Activated B cell treated with CpG ODN at 0.5 μM for 24 hours (primary cell): ENCODE measurements at regions of chr11 and their contacts with region 1.

Region 1: DNA sequence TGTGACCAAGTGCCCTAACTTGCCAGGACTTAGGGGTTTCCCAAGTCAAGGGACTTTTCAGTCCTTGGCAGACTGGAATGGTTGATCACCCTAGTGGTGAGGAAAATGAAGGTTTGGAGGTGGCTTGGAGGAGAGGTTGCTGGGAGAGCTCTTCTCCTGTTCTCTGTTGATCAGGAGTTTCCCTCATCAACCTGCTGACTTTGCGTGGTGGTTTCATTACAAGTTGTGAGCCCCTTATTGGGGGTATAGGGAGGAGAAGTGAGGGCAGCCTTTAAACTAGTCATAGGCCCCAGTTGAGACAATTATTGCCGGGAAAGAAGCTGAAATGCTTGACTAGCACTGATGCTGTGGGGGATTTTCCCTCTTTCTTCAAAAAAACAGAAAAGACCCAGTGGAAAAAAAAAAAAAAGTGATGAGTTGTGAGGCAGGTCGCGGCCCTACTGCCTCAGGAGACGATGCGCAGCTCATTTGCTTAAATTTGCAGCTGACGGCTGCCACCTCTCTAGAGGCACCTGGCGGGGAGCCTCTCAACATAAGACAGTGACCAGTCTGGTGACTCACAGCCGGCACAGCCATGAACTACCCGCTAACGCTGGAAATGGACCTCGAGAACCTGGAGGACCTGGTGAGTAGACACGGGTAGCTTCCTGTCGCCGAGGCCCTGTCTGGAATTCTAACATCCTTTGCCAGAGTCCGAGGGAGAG is at the start of gene CXCR5:
- DNase-seq: peak; percentile 69
- ATAC-seq: peak; percentile 78
- H3K4me3 Mint-ChIP-seq: peak within 1 kb of the TSS; percentile 98
- H3K27ac Mint-ChIP-seq: peak within 1 kb of the TSS; percentile 98
- H3K4me1 Mint-ChIP-seq: peaks cover 71% of the 10 kb centered on the region
- H3K27me3 Mint-ChIP-seq: no peaks in the 10 kb centered on the region
- CTCF ChIP-seq: no peak
- total RNA-seq, gene CXCR5: 198 and 199 TPM in 2 replicates

Region 2: GRCh38 chr11:117189191-117189930 is 1694.2 kb before region 1 on chr11:
- CTCF ChIA-PET with region 1: no interaction called
- POLR2A ChIA-PET with region 1: interaction called, 11 read pairs
- intact Hi-C with region 1: no loop called
- DNase-seq: peak; percentile 66
- ATAC-seq: peak; percentile 87
- H3K4me3 Mint-ChIP-seq: peak overlapping the region; percentile 74
- H3K27ac Mint-ChIP-seq: peak overlapping the region; percentile 94
- H3K4me1 Mint-ChIP-seq: peaks cover 78% of the 10 kb centered on the region
- H3K27me3 Mint-ChIP-seq: no peaks in the 10 kb centered on the region
- CTCF ChIP-seq: no peak

Region 3: GRCh38 chr11:118581057-118581456 is 302.5 kb before region 1 on chr11:
- CTCF ChIA-PET with region 1: no interaction called
- POLR2A ChIA-PET with region 1: no interaction called
- intact Hi-C with region 1: no loop called
- DNase-seq: no peak
- ATAC-seq: no peak
- H3K4me3 Mint-ChIP-seq: no peak overlapping the region
- H3K27ac Mint-ChIP-seq: no peak overlapping the region
- H3K4me1 Mint-ChIP-seq: peaks cover 15% of the 10 kb centered on the region
- H3K27me3 Mint-ChIP-seq: no peaks in the 10 kb centered on the region
- CTCF ChIP-seq: no peak

Region 4: GRCh38 chr11:118797510-118797909 is 86.0 kb before region 1 on chr11:
- CTCF ChIA-PET with region 1: no interaction called
- POLR2A ChIA-PET with region 1: interaction called, 162 read pairs
- intact Hi-C with region 1: no loop called
- DNase-seq: no peak
- ATAC-seq: no peak
- H3K4me3 Mint-ChIP-seq: no peak overlapping the region
- H3K27ac Mint-ChIP-seq: no peak overlapping the region
- H3K4me1 Mint-ChIP-seq: peaks cover 35% of the 10 kb centered on the region
- H3K27me3 Mint-ChIP-seq: no peaks in the 10 kb centered on the region
- CTCF ChIP-seq: no peak

Region 5: GRCh38 chr11:118820412-118821357 is 62.8 kb before region 1 on chr11:
- CTCF ChIA-PET with region 1: interaction called, 48 read pairs
- POLR2A ChIA-PET with region 1: interaction called, 91 read pairs
- intact Hi-C with region 1: loop called (anchors 1 kb)
- DNase-seq: peak; percentile 51
- ATAC-seq: peak; percentile 85
- H3K4me3 Mint-ChIP-seq: peak overlapping the region; percentile 77
- H3K27ac Mint-ChIP-seq: peak overlapping the region; percentile 97
- H3K4me1 Mint-ChIP-seq: peaks cover 73% of the 10 kb centered on the region
- H3K27me3 Mint-ChIP-seq: no peaks in the 10 kb centered on the region
- CTCF ChIP-seq: no peak

Region 6: GRCh38 chr11:118859973-118860372 is 23.5 kb before region 1 on chr11:
- CTCF ChIA-PET with region 1: no interaction called
- POLR2A ChIA-PET with region 1: interaction called, 27 read pairs
- intact Hi-C with region 1: no loop called
- DNase-seq: no peak
- ATAC-seq: no peak
- H3K4me3 Mint-ChIP-seq: no peak overlapping the region
- H3K27ac Mint-ChIP-seq: peak overlapping the region; percentile 4
- H3K4me1 Mint-ChIP-seq: peaks cover 37% of the 10 kb centered on the region
- H3K27me3 Mint-ChIP-seq: no peaks in the 10 kb centered on the region
- CTCF ChIP-seq: no peak

Region 7: DNA sequence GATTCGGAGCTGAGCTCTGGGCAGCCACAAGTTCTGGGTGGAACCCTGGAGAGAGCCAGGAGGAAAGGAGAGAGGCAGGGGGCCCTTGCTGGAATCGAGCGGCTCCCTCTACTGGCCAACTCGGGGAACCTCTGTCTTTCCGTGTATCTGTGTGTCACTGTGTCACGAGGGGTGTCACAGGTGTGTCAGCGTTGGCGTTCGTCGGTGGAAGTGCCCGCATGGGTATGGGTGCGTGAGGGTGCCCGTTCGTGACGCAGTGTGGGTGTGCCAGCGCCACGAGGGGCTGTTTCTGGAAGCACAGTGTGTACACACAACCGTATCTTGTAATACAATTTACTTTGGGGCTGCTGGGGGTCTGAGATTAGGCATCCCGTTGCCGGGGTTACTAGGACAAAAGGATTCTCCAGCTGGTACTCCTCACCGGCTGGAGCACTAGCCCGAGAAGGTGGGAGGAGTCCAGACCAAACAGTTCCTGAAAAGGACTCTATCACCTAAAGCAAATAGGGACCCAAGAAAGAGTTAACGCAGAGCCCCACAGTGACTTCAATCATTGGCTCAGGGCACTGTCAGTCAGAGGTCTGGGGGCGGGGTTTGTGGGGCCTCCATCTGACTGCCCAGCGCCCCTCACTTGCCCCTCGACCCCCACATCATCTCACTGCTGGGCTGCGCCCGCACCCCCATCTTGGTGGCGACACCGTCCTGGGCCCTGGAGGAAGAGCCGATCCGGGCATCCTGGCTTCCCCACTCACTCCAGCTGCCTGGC is 44.8 kb after region 1 on chr11:
- CTCF ChIA-PET with region 1: interaction called, 5 read pairs
- POLR2A ChIA-PET with region 1: interaction called, 20 read pairs
- intact Hi-C with region 1: loop called (anchors 1 kb)
- DNase-seq: peak; percentile 94
- ATAC-seq: peak; percentile 52
- H3K4me3 Mint-ChIP-seq: peak overlapping the region; percentile 95
- H3K27ac Mint-ChIP-seq: peak overlapping the region; percentile 98
- H3K4me1 Mint-ChIP-seq: peaks cover 62% of the 10 kb centered on the region
- H3K27me3 Mint-ChIP-seq: peaks cover 2% of the 10 kb centered on the region
- CTCF ChIP-seq: peak; percentile 87